Left ventricle myocardium inferior (tissue), 1 donor: ENCODE measurements at regions of chr1 and their contacts with region 1.

Region 1: GRCh38 chr1:94919241-94920030 is 7.5 kb downstream of the CNN3 start:
- DNase-seq: no peak
- H3K4me3 ChIP-seq: peak overlapping the region; percentile 6
- H3K27ac ChIP-seq: no peak overlapping the region
- H3K4me1 ChIP-seq: peaks cover 96% of the 10 kb centered on the region
- H3K27me3 ChIP-seq: no peaks in the 10 kb centered on the region
- CTCF ChIP-seq: no peak

Region 2: GRCh38 chr1:94863919-94864318 is 55.5 kb before region 1 on chr1:
- intact Hi-C with region 1: loop called (anchors 10 kb)
- DNase-seq: no peak
- H3K4me3 ChIP-seq: no peak overlapping the region
- H3K27ac ChIP-seq: peak overlapping the region; percentile 82
- H3K4me1 ChIP-seq: peaks cover 43% of the 10 kb centered on the region
- H3K27me3 ChIP-seq: no peaks in the 10 kb centered on the region
- CTCF ChIP-seq: no peak

Region 3: DNA sequence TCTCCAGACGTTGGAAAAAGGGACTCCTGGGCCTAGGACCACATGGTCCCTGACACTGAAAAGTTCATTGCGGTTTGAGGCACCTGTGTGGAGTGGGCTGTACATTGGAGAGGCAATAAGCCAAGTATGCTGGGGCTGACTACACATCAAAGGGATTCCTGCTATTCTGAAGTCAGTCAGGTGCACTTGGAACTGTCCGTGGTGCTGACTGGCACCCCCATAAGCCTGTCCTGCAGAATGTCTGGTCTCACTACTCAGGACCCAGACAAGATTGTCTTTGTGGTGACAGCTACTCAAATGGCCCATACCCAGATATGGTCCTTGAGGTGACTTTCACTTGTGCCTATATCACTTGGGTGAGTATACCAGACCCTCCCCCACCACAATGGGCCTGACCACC is 465.1 kb after region 1 on chr1:
- intact Hi-C with region 1: no loop called
- DNase-seq: peak; percentile 28
- H3K4me3 ChIP-seq: no peak overlapping the region
- H3K27ac ChIP-seq: no peak overlapping the region
- H3K4me1 ChIP-seq: peaks cover 7% of the 10 kb centered on the region
- H3K27me3 ChIP-seq: no peaks in the 10 kb centered on the region
- CTCF ChIP-seq: no peak